Activated CD4-positive, alpha-beta T cell treated with anti-CD3 and anti-CD28 coated beads for 36 hours (primary cell): ENCODE measurements at regions of chr4 and their contacts with region 1.

Region 1: DNA sequence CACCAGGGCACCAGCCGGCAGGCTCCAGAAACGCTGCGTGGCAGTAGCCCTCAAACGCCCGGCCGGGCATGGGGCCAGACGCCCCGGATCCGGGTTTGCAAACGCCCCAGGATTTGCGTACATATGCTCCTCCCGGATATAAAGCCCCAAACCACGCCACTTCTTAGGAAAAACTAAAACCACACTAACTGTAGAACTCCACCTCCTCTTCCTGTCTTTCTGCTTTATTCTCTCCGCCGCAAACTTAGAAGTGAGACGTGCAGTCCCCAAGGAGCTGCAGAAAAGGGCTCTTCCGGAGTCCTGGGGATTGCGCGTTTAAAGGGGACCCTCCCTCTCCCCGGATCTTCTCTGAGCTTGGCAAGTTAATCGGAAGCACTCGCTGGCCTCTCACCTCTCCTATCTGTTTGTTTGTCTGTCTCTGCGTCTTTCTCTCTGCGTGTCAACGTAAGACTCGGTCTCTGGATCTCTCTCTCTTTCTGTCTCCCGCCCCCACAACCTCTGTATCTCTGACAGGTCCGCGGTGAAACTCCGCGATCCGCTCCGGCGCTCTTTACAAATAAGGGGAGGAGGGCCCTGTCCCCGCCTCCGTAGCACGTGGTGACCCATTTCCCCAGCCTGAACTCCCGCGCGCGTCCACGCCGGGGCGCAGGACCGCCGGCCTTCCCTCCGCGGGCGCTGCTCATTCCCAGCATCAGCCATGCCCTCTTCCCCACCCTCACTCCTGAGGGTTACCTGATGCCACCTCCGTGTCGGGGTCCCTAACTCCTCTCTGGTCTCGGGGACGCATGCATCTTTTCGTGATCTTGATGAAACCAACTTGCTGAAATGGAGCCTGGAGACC is at the start of gene SLC39A8:
- DNase-seq: peak; percentile 95
- ATAC-seq: peak; percentile 83
- H3K4me3 Mint-ChIP-seq: peak within 1 kb of the TSS; percentile 86
- H3K27ac Mint-ChIP-seq: peak within 1 kb of the TSS; percentile 99
- H3K4me1 Mint-ChIP-seq: peaks cover 42% of the 10 kb centered on the region
- H3K27me3 Mint-ChIP-seq: no peaks in the 10 kb centered on the region
- total RNA-seq, gene SLC39A8: 46.9 to 53.5 TPM

Region 2: DNA sequence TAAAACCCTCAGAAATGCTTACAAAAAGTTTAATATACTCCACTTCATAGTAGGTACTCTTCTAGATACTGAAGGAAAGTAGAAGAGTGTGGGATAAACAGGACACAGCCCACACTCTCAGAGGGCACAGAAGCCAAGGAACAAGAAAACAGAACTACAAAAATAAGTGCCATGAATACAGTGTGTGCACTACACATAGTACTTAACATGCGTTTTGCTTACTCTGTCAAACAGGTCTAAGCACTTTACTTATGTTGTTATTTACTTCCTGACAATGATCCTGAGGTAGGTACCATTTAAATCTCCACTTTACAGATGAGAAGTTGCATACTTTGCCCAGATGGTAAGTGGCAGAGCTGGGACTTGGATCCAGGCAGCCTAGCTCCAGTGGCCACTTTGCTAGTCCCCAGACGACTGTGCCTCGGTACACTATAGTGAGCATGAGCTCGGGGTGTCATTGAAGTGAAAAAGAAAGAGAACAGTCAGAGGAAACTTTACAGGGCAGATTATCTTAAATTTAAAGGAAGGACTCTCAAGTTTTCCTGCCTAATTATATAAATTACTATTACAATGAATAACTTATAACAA is 434.3 kb before region 1 on chr4:
- CTCF ChIA-PET with region 1: no interaction called
- POLR2A ChIA-PET with region 1: no interaction called
- intact Hi-C with region 1: no loop called
- DNase-seq: no peak
- ATAC-seq: no peak
- H3K4me3 Mint-ChIP-seq: no peak overlapping the region
- H3K27ac Mint-ChIP-seq: no peak overlapping the region
- H3K4me1 Mint-ChIP-seq: no peaks in the 10 kb centered on the region
- H3K27me3 Mint-ChIP-seq: peaks cover 4% of the 10 kb centered on the region

Region 3: DNA sequence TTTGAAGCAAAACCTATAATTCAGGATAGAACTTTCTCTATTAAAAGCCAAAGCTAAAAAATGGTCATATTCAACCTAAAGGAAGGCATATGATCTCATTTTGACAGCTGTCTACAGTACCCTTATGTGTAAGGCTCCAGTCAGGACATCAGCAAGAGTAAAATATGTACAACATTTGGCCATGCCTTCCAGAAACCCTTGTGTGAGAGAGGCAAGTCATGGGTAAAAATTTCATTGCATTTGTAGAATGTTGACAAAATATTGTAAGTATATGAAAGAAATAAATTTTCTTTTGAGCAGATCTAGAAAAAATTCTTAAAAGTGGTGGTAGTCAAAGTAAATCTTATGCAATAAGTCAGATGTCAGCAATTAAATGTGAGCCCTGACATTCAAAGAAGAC is 132.1 kb before region 1 on chr4:
- CTCF ChIA-PET with region 1: no interaction called
- POLR2A ChIA-PET with region 1: no interaction called
- intact Hi-C with region 1: no loop called
- DNase-seq: no peak
- ATAC-seq: no peak
- H3K4me3 Mint-ChIP-seq: no peak overlapping the region
- H3K27ac Mint-ChIP-seq: no peak overlapping the region
- H3K4me1 Mint-ChIP-seq: no peaks in the 10 kb centered on the region
- H3K27me3 Mint-ChIP-seq: peaks cover 12% of the 10 kb centered on the region

Region 4: GRCh38 chr4:102247041-102247440 is 98.1 kb before region 1 on chr4:
- CTCF ChIA-PET with region 1: no interaction called
- POLR2A ChIA-PET with region 1: no interaction called
- intact Hi-C with region 1: no loop called
- DNase-seq: no peak
- ATAC-seq: no peak
- H3K4me3 Mint-ChIP-seq: no peak overlapping the region
- H3K27ac Mint-ChIP-seq: no peak overlapping the region
- H3K4me1 Mint-ChIP-seq: no peaks in the 10 kb centered on the region
- H3K27me3 Mint-ChIP-seq: no peaks in the 10 kb centered on the region

Region 5: DNA sequence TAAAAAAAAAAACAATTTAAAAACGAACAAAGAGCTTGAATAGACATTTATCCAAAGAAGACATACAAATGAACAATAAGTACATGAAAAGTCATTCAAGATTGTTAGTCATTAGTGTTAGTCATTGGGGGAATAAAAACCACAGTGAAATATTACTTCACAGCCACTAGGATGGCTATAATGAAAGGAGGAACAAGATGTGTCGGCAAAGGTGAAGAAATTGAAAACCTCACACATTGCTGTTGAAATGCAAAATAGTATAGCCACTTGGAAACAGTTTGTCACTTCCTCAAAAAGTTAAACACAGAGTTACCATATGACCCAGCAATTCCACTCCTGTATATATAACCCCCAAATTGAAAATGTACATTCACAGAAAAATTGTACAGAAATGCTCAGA is 45.3 kb after region 1 on chr4:
- CTCF ChIA-PET with region 1: interaction called, 6 read pairs
- POLR2A ChIA-PET with region 1: no interaction called
- intact Hi-C with region 1: loop called (anchors 1 kb)
- DNase-seq: no peak
- ATAC-seq: peak; percentile 98
- H3K4me3 Mint-ChIP-seq: no peak overlapping the region
- H3K27ac Mint-ChIP-seq: no peak overlapping the region
- H3K4me1 Mint-ChIP-seq: peaks cover 18% of the 10 kb centered on the region
- H3K27me3 Mint-ChIP-seq: peaks cover 13% of the 10 kb centered on the region

Region 6: DNA sequence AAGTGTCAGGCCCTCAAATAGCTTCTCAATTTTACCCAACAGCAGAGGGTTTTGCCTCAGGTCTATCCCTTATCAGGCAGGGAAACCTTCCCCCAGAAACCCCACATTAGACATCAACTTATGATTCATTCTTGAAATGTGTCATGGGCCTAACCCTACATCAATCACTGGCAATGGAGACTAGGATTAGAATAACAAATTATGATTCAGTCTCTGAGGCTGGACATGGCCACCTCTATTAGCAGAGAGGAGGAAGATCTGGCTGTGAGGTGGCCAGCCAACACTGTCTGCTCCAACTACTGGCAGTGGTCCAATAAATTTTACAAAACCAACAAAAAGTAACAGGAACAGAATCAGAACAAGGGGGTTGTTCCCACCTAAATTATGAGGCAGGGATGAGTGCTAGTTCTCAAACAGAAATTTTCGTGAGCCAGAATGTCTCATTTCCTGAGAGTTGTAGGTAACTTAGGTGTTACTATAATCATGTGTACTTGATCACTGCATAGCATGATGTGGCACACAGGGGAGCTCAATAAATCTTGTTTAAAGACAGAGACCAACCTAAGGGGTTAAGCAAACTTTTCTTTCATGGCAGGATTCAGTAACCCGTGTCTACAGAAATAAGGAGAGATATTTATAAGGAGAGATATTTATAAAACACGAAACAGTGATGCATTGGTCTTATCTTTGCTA is 282.8 kb after region 1 on chr4:
- CTCF ChIA-PET with region 1: interaction called, 3 read pairs
- POLR2A ChIA-PET with region 1: no interaction called
- intact Hi-C with region 1: loop called (anchors 1 to 2 kb)
- DNase-seq: peak; percentile 48
- ATAC-seq: peak; percentile 85
- H3K4me3 Mint-ChIP-seq: peak overlapping the region; percentile 50
- H3K27ac Mint-ChIP-seq: peak overlapping the region; percentile 86
- H3K4me1 Mint-ChIP-seq: peaks cover 69% of the 10 kb centered on the region
- H3K27me3 Mint-ChIP-seq: no peaks in the 10 kb centered on the region

Region 7: GRCh38 chr4:103008875-103009729 is 663.9 kb after region 1 on chr4:
- CTCF ChIA-PET with region 1: no interaction called
- POLR2A ChIA-PET with region 1: no interaction called
- intact Hi-C with region 1: loop called (anchors 2 to 10 kb)
- DNase-seq: no peak
- ATAC-seq: peak; percentile 95
- H3K4me3 Mint-ChIP-seq: no peak overlapping the region
- H3K27ac Mint-ChIP-seq: no peak overlapping the region
- H3K4me1 Mint-ChIP-seq: no peaks in the 10 kb centered on the region
- H3K27me3 Mint-ChIP-seq: peaks cover 2% of the 10 kb centered on the region

Region 8: GRCh38 chr4:103075901-103076739 is 730.9 kb after region 1 on chr4:
- CTCF ChIA-PET with region 1: interaction called, 3 read pairs
- POLR2A ChIA-PET with region 1: interaction called, 3 read pairs
- intact Hi-C with region 1: loop called in 1 of 2 experiments (anchors 2 kb)
- DNase-seq: peak; percentile 79
- ATAC-seq: peak; percentile 63
- H3K4me3 Mint-ChIP-seq: peak overlapping the region; percentile 84
- H3K27ac Mint-ChIP-seq: peak overlapping the region; percentile 99
- H3K4me1 Mint-ChIP-seq: peaks cover 45% of the 10 kb centered on the region
- H3K27me3 Mint-ChIP-seq: no peaks in the 10 kb centered on the region